ENCODE measurements at regions of chr20 and their contacts with region 1.

Region 1: DNA sequence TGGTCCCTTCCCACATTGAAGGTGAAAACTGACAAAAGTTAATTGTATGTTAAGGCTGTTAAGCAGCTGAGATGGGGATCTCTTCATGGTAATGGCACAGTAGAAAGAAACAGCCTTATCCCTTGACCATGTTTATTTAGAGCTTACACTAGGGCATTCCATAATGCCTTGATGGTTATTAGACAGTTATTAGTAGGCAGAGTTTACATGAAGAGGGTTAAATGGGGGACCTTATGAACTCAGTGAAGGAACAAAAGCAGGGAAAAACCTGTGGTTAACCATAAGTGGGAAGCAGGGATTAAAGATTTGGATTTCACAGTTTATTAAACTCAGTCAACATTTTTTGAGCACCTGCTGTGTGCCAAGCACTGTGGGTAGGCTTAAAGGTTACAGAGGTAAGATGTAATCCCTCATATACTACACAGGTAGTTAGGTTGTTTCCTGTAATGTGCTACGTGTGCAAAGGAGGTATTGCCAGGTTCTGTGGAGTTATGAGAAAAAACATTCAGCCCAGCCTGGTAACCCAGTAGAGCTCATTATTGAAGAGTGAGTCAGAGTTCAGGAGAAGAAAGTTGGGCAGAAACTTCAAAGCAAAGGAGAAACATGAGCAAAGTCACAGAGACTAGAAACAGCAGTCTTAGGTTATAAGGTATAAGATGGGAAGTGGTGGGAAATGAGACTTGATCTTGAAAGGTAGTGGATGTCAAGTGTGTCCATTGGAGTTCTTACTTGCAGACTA is 32.3 kb upstream of the GNRH2 start:
- DNase-seq: peak; percentile 46
- ATAC-seq: peak; percentile 69
- H3K4me3 Mint-ChIP-seq: peak overlapping the region; percentile 37
- H3K27ac Mint-ChIP-seq: peak overlapping the region; percentile 94
- H3K4me1 Mint-ChIP-seq: peaks cover 70% of the 10 kb centered on the region
- H3K27me3 Mint-ChIP-seq: no peaks in the 10 kb centered on the region

Region 2: GRCh38 chr20:2692036-2692885 is 318.9 kb before region 1 on chr20 and contains the start of gene EBF4:
- CTCF ChIA-PET with region 1: no interaction called
- POLR2A ChIA-PET with region 1: no interaction called
- intact Hi-C with region 1: no loop called
- DNase-seq: peak; percentile 59
- ATAC-seq: no peak
- H3K4me3 Mint-ChIP-seq: peak within 1 kb of the TSS; percentile 78
- H3K27ac Mint-ChIP-seq: peak within 1 kb of the TSS; percentile 73
- H3K4me1 Mint-ChIP-seq: peaks cover 18% of the 10 kb centered on the region
- H3K27me3 Mint-ChIP-seq: peaks cover 41% of the 10 kb centered on the region
- total RNA-seq, gene EBF4: 3.7 to 4.3 TPM

Region 3: GRCh38 chr20:2849529-2849928 is 161.6 kb before region 1 on chr20:
- CTCF ChIA-PET with region 1: no interaction called
- POLR2A ChIA-PET with region 1: interaction called, 23 read pairs
- intact Hi-C with region 1: no loop called
- DNase-seq: peak; percentile 29
- ATAC-seq: peak; percentile 89
- H3K4me3 Mint-ChIP-seq: no peak overlapping the region
- H3K27ac Mint-ChIP-seq: no peak overlapping the region
- H3K4me1 Mint-ChIP-seq: peaks cover 26% of the 10 kb centered on the region
- H3K27me3 Mint-ChIP-seq: no peaks in the 10 kb centered on the region

Region 4: GRCh38 chr20:2890742-2891141 is 120.4 kb before region 1 on chr20:
- CTCF ChIA-PET with region 1: no interaction called
- POLR2A ChIA-PET with region 1: no interaction called
- intact Hi-C with region 1: no loop called
- DNase-seq: no peak
- ATAC-seq: peak; percentile 39
- H3K4me3 Mint-ChIP-seq: no peak overlapping the region
- H3K27ac Mint-ChIP-seq: peak overlapping the region; percentile 59
- H3K4me1 Mint-ChIP-seq: peaks cover 45% of the 10 kb centered on the region
- H3K27me3 Mint-ChIP-seq: no peaks in the 10 kb centered on the region

Region 5: GRCh38 chr20:2955257-2955970 is 55.7 kb before region 1 on chr20:
- CTCF ChIA-PET with region 1: no interaction called
- POLR2A ChIA-PET with region 1: interaction called, 10 read pairs
- intact Hi-C with region 1: no loop called
- DNase-seq: peak; percentile 20
- ATAC-seq: peak; percentile 88
- H3K4me3 Mint-ChIP-seq: no peak overlapping the region
- H3K27ac Mint-ChIP-seq: peak overlapping the region; percentile 62
- H3K4me1 Mint-ChIP-seq: peaks cover 23% of the 10 kb centered on the region
- H3K27me3 Mint-ChIP-seq: no peaks in the 10 kb centered on the region

Region 6: GRCh38 chr20:3000852-3001523 is 10.2 kb before region 1 on chr20:
- CTCF ChIA-PET with region 1: interaction called, 18 read pairs
- POLR2A ChIA-PET with region 1: interaction called, 3 read pairs
- intact Hi-C with region 1: no loop called
- DNase-seq: peak; percentile 23
- ATAC-seq: peak; percentile 98
- H3K4me3 Mint-ChIP-seq: no peak overlapping the region
- H3K27ac Mint-ChIP-seq: peak overlapping the region; percentile 59
- H3K4me1 Mint-ChIP-seq: peaks cover 11% of the 10 kb centered on the region
- H3K27me3 Mint-ChIP-seq: no peaks in the 10 kb centered on the region

Region 7: DNA sequence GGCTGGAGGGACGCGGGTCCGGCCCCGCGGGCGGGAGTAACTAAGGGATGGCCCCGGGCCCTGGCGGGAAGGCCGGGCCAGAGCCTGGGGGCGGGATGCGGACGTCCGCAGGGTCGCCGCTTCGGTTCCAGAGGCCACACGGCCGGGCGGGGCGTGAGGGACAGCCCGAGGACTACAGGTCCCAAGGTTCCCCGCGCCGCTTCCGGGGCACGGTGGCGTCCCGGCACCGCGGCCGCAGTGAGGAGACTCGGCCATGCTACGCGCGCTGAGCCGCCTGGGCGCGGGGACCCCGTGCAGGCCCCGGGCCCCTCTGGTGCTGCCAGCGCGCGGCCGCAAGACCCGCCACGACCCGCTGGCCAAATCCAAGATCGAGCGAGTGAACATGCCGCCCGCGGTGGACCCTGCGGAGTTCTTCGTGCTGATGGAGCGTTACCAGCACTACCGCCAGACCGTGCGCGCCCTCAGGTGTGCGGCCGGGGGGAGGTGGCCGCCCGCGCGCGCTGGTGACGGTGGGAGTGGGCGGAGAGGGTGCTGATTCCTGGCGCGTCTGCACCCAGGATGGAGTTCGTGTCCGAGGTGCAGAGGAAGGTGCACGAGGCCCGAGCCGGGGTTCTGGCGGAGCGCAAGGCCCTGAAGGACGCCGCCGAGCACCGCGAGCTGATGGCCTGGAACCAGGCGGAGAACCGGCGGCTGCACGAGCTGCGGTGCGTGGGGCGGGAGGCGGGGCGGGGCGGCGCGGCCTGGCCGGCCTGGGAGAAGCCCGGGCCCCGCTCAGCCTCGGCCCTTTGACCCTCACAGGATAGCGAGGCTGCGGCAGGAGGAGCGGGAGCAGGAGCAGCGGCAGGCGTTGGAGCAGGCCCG is 34.9 kb after region 1 on chr20 and contains the start of gene MRPS26:
- CTCF ChIA-PET with region 1: no interaction called
- POLR2A ChIA-PET with region 1: interaction called, 13 read pairs
- intact Hi-C with region 1: loop called (anchors 1 to 5 kb)
- DNase-seq: peak; percentile 92
- ATAC-seq: peak; percentile 94
- H3K4me3 Mint-ChIP-seq: peak within 1 kb of the TSS; percentile 89
- H3K27ac Mint-ChIP-seq: peak within 1 kb of the TSS; percentile 88
- H3K4me1 Mint-ChIP-seq: peaks cover 27% of the 10 kb centered on the region
- H3K27me3 Mint-ChIP-seq: no peaks in the 10 kb centered on the region
- total RNA-seq, gene MRPS26: 107 to 153 TPM

Measured in activated CD4-positive, alpha-beta T cell treated with anti-CD3 and anti-CD28 coated beads for 36 hours (primary cell).